Thyroid gland (tissue), 4 donors: ENCODE measurements at regions of chr5 and their contacts with region 1.

Region 1: GRCh38 chr5:151651997-151652645 is 34.6 kb downstream of the SPARC start:
- DNase-seq: peak; percentile 81 to 86
- H3K4me3 ChIP-seq: no peak overlapping the region
- H3K27ac ChIP-seq: no peak overlapping the region
- H3K4me1 ChIP-seq: no peaks in the 10 kb centered on the region
- H3K27me3 ChIP-seq: no peaks in the 10 kb centered on the region
- CTCF ChIP-seq: peak; percentile 63 to 95 (median 87)
- POLR2A ChIP-seq: no peak

Region 2: GRCh38 chr5:151447174-151448037 is 204.7 kb before region 1 on chr5 and contains the start of gene SLC36A1:
- intact Hi-C with region 1: loop called (anchors 5 kb)
- DNase-seq: peak; percentile 93
- H3K4me3 ChIP-seq: peak within 1 kb of the TSS; percentile 11 to 68 (median 50)
- H3K27ac ChIP-seq: peak within 1 kb of the TSS in 2 of 3 donors; percentile 3 to 32
- H3K4me1 ChIP-seq: peaks cover 0 to 6% of the 10 kb centered on the region in 2 donors
- H3K27me3 ChIP-seq: no peaks in the 10 kb centered on the region
- CTCF ChIP-seq: peak; percentile 87 to 98 (median 96)
- POLR2A ChIP-seq: no peak
- total RNA-seq, gene SLC36A1: 4.5 to 7.5 (median 5.9) TPM